ENCODE measurements at regions of chr2 and their contacts with region 1.

Region 1: GRCh38 chr2:4164236-4164635 is 460.9 kb downstream of the DCDC2C start:
- DNase-seq: no peak
- ATAC-seq: no peak
- H3K4me3 ChIP-seq: no peak overlapping the region
- H3K4me3 Mint-ChIP-seq: no peak overlapping the region
- H3K27ac ChIP-seq: no peak overlapping the region
- H3K27ac Mint-ChIP-seq: no peak overlapping the region
- H3K4me1 ChIP-seq: no peaks in the 10 kb centered on the region
- H3K4me1 Mint-ChIP-seq: no peaks in the 10 kb centered on the region
- H3K27me3 ChIP-seq: no peaks in the 10 kb centered on the region
- H3K27me3 Mint-ChIP-seq: no peaks in the 10 kb centered on the region
- CTCF ChIP-seq: no peak

Region 2: GRCh38 chr2:4175343-4175742 is 11.1 kb after region 1 on chr2:
- CTCF ChIA-PET with region 1: no interaction called
- POLR2A ChIA-PET with region 1: no interaction called
- intact Hi-C with region 1: loop called in 1 of 2 experiments (anchors 1 kb)
- DNase-seq: no peak
- ATAC-seq: no peak
- H3K4me3 ChIP-seq: no peak overlapping the region
- H3K4me3 Mint-ChIP-seq: no peak overlapping the region
- H3K27ac ChIP-seq: no peak overlapping the region
- H3K27ac Mint-ChIP-seq: no peak overlapping the region
- H3K4me1 ChIP-seq: no peaks in the 10 kb centered on the region
- H3K4me1 Mint-ChIP-seq: no peaks in the 10 kb centered on the region
- H3K27me3 ChIP-seq: no peaks in the 10 kb centered on the region
- H3K27me3 Mint-ChIP-seq: no peaks in the 10 kb centered on the region
- CTCF ChIP-seq: no peak

Region 3: GRCh38 chr2:4533806-4534205 is 369.6 kb after region 1 on chr2:
- CTCF ChIA-PET with region 1: no interaction called
- POLR2A ChIA-PET with region 1: no interaction called
- intact Hi-C with region 1: no loop called
- DNase-seq: no peak
- ATAC-seq: no peak
- H3K4me3 ChIP-seq: no peak overlapping the region
- H3K4me3 Mint-ChIP-seq: no peak overlapping the region
- H3K27ac ChIP-seq: no peak overlapping the region
- H3K27ac Mint-ChIP-seq: no peak overlapping the region
- H3K4me1 ChIP-seq: no peaks in the 10 kb centered on the region
- H3K4me1 Mint-ChIP-seq: no peaks in the 10 kb centered on the region
- H3K27me3 ChIP-seq: no peaks in the 10 kb centered on the region
- H3K27me3 Mint-ChIP-seq: no peaks in the 10 kb centered on the region
- CTCF ChIP-seq: no peak

Region 4: DNA sequence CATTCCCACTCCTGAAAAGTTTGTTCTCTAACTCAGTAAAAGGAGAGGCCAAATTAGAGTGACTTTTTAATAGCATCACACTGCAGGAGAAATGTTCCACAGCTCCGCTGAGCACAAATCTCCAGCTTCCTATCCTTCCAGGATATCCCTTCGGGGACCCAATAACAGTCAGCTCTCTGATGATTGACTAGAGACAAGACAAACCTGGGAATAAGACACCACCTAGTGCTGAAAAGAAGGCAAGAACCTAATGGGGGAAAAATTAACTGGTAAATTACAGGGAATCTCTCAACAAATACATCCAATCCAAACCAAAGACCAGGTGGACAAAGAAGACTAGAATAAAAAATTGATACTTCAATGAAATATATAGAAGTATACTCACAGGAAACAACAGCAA is 550.8 kb after region 1 on chr2:
- CTCF ChIA-PET with region 1: no interaction called
- POLR2A ChIA-PET with region 1: no interaction called
- intact Hi-C with region 1: no loop called
- DNase-seq: no peak
- ATAC-seq: no peak
- H3K4me3 ChIP-seq: no peak overlapping the region
- H3K4me3 Mint-ChIP-seq: no peak overlapping the region
- H3K27ac ChIP-seq: no peak overlapping the region
- H3K27ac Mint-ChIP-seq: no peak overlapping the region
- H3K4me1 ChIP-seq: no peaks in the 10 kb centered on the region
- H3K4me1 Mint-ChIP-seq: no peaks in the 10 kb centered on the region
- H3K27me3 ChIP-seq: no peaks in the 10 kb centered on the region
- H3K27me3 Mint-ChIP-seq: no peaks in the 10 kb centered on the region
- CTCF ChIP-seq: no peak